CD8-positive, alpha-beta T cell (primary cell): ENCODE measurements at regions of chr12 and their contacts with region 1.

Region 1: DNA sequence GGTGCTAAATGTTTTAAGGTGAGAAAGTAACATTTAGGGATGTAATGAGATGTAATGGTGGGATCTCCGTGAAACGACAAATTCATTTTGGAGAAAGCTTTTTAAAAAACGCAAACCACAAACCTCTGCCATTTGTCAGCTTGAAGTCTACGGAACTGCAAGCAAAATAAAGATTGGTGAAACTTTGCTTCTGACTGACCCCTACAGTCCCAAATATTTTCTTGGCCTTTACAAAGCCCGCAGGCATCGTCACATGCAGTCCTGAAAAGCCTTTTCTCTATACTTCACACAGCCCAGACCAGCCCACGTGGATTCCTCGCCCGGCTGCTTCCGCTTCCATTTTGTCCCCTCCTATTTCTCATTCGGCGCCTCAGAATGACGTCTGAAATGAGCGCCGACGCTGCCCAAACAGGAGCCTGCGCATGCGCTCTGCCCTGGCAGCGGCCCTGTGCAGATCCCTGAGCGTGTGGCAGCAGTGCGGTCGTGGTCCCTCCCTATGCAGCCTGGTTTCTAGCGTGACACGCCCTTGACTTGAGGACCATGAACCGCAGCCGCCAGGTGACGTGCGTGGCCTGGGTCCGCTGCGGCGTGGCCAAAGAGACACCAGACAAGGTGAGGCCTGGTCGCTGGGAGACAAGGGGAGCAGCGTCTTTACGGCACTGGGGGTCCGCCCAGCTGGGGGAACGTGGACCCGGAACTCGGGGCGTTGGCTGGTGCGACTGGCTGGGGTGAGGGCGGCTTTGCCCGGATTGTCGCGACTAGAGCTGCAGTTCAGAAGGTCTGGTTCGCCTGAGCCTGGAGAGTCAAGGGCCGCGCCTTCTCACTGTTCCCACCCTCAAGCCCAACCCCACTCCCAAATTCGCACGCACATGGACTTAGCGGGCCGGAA is at the start of gene PWP1:
- DNase-seq: peak; percentile 90 to 98 (median 96)
- ATAC-seq: peak; percentile 84
- H3K4me3 ChIP-seq: peak within 1 kb of the TSS; percentile 75 to 82
- H3K4me3 Mint-ChIP-seq: peak within 1 kb of the TSS; percentile 98
- H3K27ac ChIP-seq: peak within 1 kb of the TSS; percentile 74 to 90
- H3K27ac Mint-ChIP-seq: peak within 1 kb of the TSS; percentile 98
- H3K4me1 ChIP-seq: peaks cover 20% of the 10 kb centered on the region
- H3K4me1 Mint-ChIP-seq: peaks cover 34% of the 10 kb centered on the region
- H3K27me3 ChIP-seq: no peaks in the 10 kb centered on the region
- H3K27me3 Mint-ChIP-seq: no peaks in the 10 kb centered on the region
- CTCF ChIP-seq: no peak
- total RNA-seq, gene PWP1: 27.7 to 28.8 TPM

Region 2: DNA sequence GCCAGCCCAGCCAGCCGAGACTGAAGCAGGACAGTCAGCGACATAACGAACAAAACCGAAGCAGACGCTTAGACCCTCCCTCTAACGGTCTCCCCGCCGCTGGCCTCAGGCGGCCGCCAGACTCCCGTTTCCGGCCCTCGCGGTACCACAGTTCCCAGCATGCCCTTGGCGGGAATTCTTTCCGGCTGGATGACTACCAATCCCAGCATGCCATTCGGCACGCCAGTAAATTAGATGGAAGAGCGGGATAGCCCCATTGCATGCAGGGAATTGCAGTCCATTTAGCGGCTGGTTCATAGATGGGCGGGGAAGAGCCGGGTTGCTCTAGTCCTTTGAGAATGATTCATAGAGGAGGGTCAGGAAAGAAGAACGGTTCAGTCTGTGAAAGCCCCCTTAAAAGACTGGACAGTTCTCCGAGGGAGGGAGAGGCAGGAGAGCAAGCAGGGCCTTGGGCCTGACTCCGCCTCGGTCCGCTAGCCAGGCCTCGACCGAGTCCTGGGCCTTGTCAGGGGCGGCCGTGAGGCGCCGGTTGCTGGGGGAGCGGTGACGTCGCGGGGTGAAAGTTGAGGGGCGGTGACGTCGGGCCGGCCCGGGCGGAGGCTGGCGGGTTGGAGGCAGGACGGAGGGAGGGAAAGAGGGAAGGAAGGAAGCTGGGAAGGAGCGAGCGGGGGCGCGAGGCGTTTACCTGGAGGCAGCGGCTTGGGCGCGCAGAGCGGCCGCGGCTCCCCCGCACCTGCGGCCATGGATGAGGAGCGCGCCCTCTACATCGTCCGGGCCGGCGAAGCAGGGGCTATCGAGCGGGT is 911.4 kb before region 1 on chr12 and contains the start of gene RIC8B:
- CTCF ChIA-PET with region 1: no interaction called
- POLR2A ChIA-PET with region 1: no interaction called
- intact Hi-C with region 1: loop called in 1 of 2 experiments (anchors 10 kb)
- DNase-seq: peak; percentile 56 to 92 (median 74)
- ATAC-seq: peak; percentile 81
- H3K4me3 ChIP-seq: peak within 1 kb of the TSS; percentile 80 to 96
- H3K4me3 Mint-ChIP-seq: peak within 1 kb of the TSS; percentile 96
- H3K27ac ChIP-seq: peak within 1 kb of the TSS; percentile 78 to 96
- H3K27ac Mint-ChIP-seq: peak within 1 kb of the TSS; percentile 99
- H3K4me1 ChIP-seq: peaks cover 19% of the 10 kb centered on the region
- H3K4me1 Mint-ChIP-seq: peaks cover 40% of the 10 kb centered on the region
- H3K27me3 ChIP-seq: no peaks in the 10 kb centered on the region
- H3K27me3 Mint-ChIP-seq: no peaks in the 10 kb centered on the region
- CTCF ChIP-seq: no peak
- total RNA-seq, gene RIC8B: 5.6 to 6.4 TPM

Region 3: DNA sequence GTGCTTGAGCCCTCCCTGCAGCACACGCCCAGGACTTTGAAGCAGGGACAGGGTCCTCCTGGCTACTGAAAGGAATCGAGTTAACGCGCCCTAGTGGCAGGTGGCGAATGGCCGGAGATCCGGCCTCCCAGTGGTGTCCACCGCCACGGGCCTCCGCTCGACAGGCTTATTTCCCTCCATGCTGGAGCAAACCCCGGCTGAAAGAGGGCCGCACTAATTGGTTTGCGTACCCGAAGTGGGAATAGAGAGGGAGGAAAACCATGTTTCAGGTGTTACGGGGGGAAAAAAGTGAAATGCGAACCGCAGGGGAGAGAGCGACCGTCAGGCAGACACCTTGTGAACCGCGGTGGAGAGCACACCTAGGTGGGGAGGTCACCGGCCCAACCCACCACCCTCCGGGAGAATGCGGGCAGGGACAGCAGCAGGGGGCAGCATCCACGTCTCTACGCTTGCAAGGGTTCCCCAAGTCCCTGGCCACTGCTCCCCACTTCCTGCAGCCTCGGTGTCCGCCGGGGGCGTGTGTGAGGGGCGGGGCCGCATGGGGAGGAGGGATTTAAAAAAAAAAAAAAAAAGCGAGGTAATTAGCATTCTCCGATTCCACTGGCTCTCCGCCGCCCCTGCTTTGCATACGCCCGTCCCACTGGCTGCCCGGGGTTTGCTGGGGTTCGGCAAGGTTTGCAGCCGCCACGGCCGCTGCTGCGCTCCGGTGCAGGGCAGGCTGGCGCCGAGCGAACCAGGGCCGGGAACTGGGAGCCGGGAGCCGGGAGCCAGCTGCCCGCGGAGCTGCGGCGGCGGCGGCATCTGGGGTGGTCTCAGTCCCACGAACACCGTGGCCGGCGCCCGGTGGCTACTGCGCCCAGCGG is 367.6 kb before region 1 on chr12:
- CTCF ChIA-PET with region 1: no interaction called
- POLR2A ChIA-PET with region 1: no interaction called
- intact Hi-C with region 1: loop called (anchors 1 to 10 kb)
- DNase-seq: peak; percentile 69 to 93 (median 86)
- ATAC-seq: peak; percentile 53
- H3K4me3 ChIP-seq: peak overlapping the region; percentile 69 to 74
- H3K4me3 Mint-ChIP-seq: peak overlapping the region; percentile 87
- H3K27ac ChIP-seq: peak overlapping the region; percentile 23 to 81
- H3K27ac Mint-ChIP-seq: peak overlapping the region; percentile 49
- H3K4me1 ChIP-seq: peaks cover 23% of the 10 kb centered on the region
- H3K4me1 Mint-ChIP-seq: peaks cover 36% of the 10 kb centered on the region
- H3K27me3 ChIP-seq: no peaks in the 10 kb centered on the region
- H3K27me3 Mint-ChIP-seq: no peaks in the 10 kb centered on the region
- CTCF ChIP-seq: peak; percentile 48

Region 4: GRCh38 chr12:107748472-107748871 is 62.9 kb after region 1 on chr12:
- CTCF ChIA-PET with region 1: no interaction called
- POLR2A ChIA-PET with region 1: no interaction called
- intact Hi-C with region 1: no loop called
- DNase-seq: no peak
- ATAC-seq: no peak
- H3K4me3 ChIP-seq: no peak overlapping the region
- H3K4me3 Mint-ChIP-seq: no peak overlapping the region
- H3K27ac ChIP-seq: no peak overlapping the region
- H3K27ac Mint-ChIP-seq: no peak overlapping the region
- H3K4me1 ChIP-seq: peaks cover 9% of the 10 kb centered on the region
- H3K4me1 Mint-ChIP-seq: peaks cover 16% of the 10 kb centered on the region
- H3K27me3 ChIP-seq: no peaks in the 10 kb centered on the region
- H3K27me3 Mint-ChIP-seq: no peaks in the 10 kb centered on the region
- CTCF ChIP-seq: no peak

Region 5: DNA sequence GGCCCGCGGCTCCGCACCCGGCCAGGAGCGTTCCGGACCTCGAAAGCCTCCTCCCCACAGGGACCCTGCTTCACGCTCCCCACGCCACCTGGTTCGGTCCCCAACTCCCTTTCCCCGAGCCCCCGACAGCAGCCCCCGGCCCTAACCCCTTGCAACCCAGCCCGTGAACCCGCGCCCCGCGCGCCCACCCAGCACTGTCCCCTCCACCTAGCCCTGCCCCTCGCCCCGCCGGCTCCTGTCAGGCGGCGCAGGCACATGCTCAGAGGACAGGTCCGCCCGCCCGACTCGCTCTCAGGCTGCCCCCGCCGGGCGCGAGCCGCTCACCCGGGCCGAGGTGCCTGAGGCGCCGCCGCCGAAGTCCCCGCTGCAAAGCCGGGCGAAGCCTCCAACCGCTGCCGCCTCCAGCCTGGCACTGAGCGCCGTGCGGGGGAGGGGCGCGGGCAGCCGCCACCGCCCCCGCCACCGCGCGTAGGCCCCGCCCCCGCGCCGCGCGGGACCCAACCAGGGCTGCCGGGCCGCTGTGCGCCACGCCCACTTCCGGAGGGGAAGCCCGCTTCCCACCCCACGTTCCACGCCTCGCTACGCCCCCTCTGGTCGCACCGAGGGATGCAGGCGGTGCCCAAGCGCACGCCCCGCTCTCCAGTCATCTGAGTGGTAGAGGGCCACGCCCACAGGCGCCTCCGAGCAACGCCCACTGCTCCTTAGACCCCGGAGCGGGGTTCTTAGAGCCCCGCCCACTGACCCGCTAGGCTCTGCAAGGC is 1045.7 kb after region 1 on chr12 and contains the start of gene CORO1C:
- CTCF ChIA-PET with region 1: no interaction called
- POLR2A ChIA-PET with region 1: no interaction called
- intact Hi-C with region 1: loop called in 1 of 2 experiments (anchors 5 kb)
- DNase-seq: peak; percentile 86 to 97 (median 92)
- ATAC-seq: peak; percentile 75
- H3K4me3 ChIP-seq: peak within 1 kb of the TSS; percentile 91 to 93
- H3K4me3 Mint-ChIP-seq: peak within 1 kb of the TSS; percentile 94
- H3K27ac ChIP-seq: peak within 1 kb of the TSS; percentile 67 to 85
- H3K27ac Mint-ChIP-seq: peak within 1 kb of the TSS; percentile 86
- H3K4me1 ChIP-seq: peaks cover 7% of the 10 kb centered on the region
- H3K4me1 Mint-ChIP-seq: peaks cover 26% of the 10 kb centered on the region
- H3K27me3 ChIP-seq: no peaks in the 10 kb centered on the region
- H3K27me3 Mint-ChIP-seq: no peaks in the 10 kb centered on the region
- CTCF ChIP-seq: peak; percentile 74
- total RNA-seq, gene CORO1C: 10.3 to 15.4 TPM

Region 6: DNA sequence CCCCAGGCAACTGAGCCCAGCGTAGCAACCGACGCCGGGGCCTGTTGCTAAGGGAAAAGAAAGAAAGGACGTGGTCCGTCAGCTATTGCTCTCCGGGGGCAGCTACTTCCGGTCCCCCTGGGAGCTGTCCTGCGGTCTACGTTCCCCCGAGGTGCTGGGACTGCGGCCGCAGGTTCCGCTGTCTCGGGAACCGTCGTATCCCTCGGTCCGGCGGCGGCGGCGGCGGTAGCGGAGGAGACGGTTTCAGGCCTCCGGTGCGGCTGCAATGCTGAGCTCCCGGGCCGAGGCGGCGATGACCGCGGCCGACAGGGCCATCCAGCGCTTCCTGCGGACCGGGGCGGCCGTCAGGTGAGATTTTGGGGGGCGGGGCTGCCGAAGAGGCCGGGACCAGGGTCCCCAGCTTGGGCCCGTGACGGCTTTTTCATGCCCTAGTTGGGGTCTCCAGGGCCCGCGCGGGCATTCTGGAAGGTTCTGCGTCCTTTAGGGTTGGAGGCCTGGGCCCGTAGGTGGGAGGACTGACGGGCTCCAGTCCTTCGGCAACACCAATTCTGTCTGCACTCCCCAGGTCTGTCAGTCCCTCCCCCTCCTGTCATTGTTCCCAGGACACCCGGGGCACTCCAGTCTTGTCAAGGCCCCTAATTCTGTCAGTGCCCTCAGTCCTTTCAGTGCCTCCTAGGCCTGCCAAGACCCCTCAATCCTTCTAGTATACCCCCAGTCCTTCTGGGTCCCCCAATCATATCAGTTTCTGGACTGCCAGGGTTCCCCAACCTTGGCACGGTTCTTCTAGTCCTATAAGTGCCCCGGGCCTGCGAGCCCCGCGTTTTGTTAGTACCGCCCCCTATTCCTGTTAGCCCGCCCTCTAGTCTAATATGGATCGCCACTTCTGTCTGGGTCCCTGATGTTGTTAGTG is 1367.1 kb after region 1 on chr12 and contains the start of gene USP30:
- CTCF ChIA-PET with region 1: no interaction called
- POLR2A ChIA-PET with region 1: no interaction called
- intact Hi-C with region 1: loop called (anchors 2 to 5 kb)
- DNase-seq: peak; percentile 73 to 93 (median 85)
- ATAC-seq: peak; percentile 74
- H3K4me3 ChIP-seq: peak within 1 kb of the TSS; percentile 85 to 90
- H3K4me3 Mint-ChIP-seq: peak within 1 kb of the TSS; percentile 89
- H3K27ac ChIP-seq: peak within 1 kb of the TSS; percentile 68 to 91
- H3K27ac Mint-ChIP-seq: peak within 1 kb of the TSS; percentile 96
- H3K4me1 ChIP-seq: peaks cover 7% of the 10 kb centered on the region
- H3K4me1 Mint-ChIP-seq: peaks cover 21% of the 10 kb centered on the region
- H3K27me3 ChIP-seq: no peaks in the 10 kb centered on the region
- H3K27me3 Mint-ChIP-seq: no peaks in the 10 kb centered on the region
- CTCF ChIP-seq: no peak
- total RNA-seq, gene USP30: 28.2 to 33.1 TPM